Activated CD4-positive, alpha-beta T cell treated with anti-CD3 and anti-CD28 coated beads for 36 hours (primary cell): ENCODE measurements at regions of chr1 and their contacts with region 1.

Region 1: DNA sequence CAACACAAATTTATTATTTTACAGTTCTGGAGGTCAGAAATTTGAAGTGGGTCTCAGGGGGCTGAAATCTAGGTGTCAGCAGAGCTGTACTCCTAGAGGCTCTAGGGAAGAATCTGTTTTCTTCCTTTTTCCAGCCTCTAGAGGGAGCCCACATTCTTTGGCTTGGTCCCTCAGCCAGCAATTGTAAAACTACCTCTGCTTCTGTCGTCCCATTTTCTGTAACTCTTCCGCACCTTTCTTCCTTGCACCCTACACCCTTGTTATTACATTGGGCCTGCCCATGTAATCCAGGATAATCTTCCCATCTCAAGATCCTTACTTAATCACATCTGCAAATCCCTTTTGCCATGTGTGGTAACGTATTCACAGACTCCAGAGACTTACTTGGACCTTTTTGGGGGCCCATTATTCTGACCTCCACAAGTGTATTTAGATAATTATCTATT is 24.8 kb upstream of the THEM4 start:
- DNase-seq: peak; percentile 63
- ATAC-seq: peak; percentile 90
- H3K4me3 Mint-ChIP-seq: no peak overlapping the region
- H3K27ac Mint-ChIP-seq: no peak overlapping the region
- H3K4me1 Mint-ChIP-seq: peaks cover 2% of the 10 kb centered on the region
- H3K27me3 Mint-ChIP-seq: no peaks in the 10 kb centered on the region

Region 2: DNA sequence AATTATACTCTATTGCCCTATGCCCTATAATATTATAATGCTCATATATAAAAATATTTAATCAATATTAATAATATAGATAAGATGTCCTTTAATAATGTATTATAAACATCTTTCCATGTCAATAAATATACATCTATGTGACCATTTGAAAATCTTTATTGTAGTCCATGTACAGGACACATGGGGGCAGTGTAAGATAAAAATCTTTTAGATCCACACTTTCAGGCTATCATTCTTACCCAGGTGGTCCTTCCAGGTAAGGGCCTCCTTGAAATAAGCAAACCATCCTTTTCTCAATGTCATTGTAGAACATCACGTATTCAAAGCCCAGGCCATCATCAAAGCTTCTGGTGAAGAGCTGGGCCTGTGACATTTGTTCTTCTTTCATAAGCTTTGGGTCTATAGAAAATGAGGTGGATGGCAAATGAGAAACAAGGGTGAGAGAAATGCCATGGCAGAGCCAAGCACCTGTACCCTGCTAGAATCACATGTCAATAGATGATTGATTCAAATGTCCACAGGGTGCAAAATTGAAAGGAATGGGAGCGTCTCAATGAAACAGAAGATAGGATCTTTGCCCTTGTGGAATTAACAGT is 45.0 kb before region 1 on chr1:
- CTCF ChIA-PET with region 1: interaction called, 8 read pairs
- POLR2A ChIA-PET with region 1: no interaction called
- intact Hi-C with region 1: loop called in 1 of 2 experiments (anchors 1 kb)
- DNase-seq: no peak
- ATAC-seq: peak; percentile 57
- H3K4me3 Mint-ChIP-seq: no peak overlapping the region
- H3K27ac Mint-ChIP-seq: no peak overlapping the region
- H3K4me1 Mint-ChIP-seq: peaks cover 25% of the 10 kb centered on the region
- H3K27me3 Mint-ChIP-seq: no peaks in the 10 kb centered on the region

Region 3: GRCh38 chr1:151945725-151946364 is 11.8 kb after region 1 on chr1:
- CTCF ChIA-PET with region 1: interaction called, 10 read pairs
- POLR2A ChIA-PET with region 1: no interaction called
- intact Hi-C with region 1: no loop called
- DNase-seq: peak; percentile 82
- ATAC-seq: peak; percentile 45
- H3K4me3 Mint-ChIP-seq: peak overlapping the region; percentile 42
- H3K27ac Mint-ChIP-seq: peak overlapping the region; percentile 88
- H3K4me1 Mint-ChIP-seq: peaks cover 42% of the 10 kb centered on the region
- H3K27me3 Mint-ChIP-seq: no peaks in the 10 kb centered on the region

Region 4: GRCh38 chr1:151993654-151994496 is 59.8 kb after region 1 on chr1 and contains the start of gene S100A10:
- CTCF ChIA-PET with region 1: interaction called, 266 read pairs
- POLR2A ChIA-PET with region 1: no interaction called
- intact Hi-C with region 1: loop called (anchors 1 kb)
- DNase-seq: peak; percentile 85
- ATAC-seq: peak; percentile 79
- H3K4me3 Mint-ChIP-seq: peak within 1 kb of the TSS; percentile 90
- H3K27ac Mint-ChIP-seq: peak within 1 kb of the TSS; percentile 94
- H3K4me1 Mint-ChIP-seq: peaks cover 48% of the 10 kb centered on the region
- H3K27me3 Mint-ChIP-seq: no peaks in the 10 kb centered on the region
- total RNA-seq, gene S100A10: 230 to 246 TPM

Region 5: DNA sequence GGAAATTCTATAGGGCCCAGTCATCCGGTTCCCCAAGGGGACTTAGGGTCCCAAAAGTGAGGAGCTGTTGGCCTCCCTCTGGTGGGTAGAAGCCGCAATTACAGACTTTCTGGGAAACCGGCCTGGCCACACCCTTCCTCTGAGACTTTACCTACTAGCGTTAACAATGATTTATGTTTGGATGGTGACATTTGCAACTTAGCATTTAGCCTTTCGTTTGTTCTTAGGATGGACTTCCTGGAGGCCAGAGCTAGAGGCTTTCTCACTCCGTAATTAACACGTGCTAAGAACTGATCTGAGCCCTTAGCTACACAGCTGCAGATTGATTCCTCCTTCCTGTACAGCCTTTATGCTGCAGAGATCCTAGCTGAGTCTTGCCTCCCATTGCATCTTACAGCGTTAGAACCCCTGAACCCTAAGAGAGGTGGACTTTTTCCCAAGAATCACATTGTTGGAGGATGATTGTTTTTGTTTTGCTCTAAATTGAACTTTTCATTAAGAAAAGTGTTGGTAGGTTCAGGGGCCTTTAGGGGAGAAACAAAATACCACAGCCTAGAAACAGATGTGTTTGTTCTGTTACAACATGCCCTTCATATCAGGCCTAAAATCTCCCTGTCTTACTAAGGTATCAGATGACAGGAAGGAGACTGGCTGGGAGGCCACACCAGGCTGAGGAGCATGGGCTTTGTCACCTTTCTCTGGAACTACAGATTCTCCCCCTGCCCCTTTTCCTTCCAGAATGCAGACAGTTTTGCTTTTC is 100.8 kb after region 1 on chr1:
- CTCF ChIA-PET with region 1: interaction called, 11 read pairs
- POLR2A ChIA-PET with region 1: no interaction called
- intact Hi-C with region 1: no loop called
- DNase-seq: peak; percentile 82
- ATAC-seq: peak; percentile 64
- H3K4me3 Mint-ChIP-seq: peak overlapping the region; percentile 82
- H3K27ac Mint-ChIP-seq: peak overlapping the region; percentile 90
- H3K4me1 Mint-ChIP-seq: peaks cover 41% of the 10 kb centered on the region
- H3K27me3 Mint-ChIP-seq: no peaks in the 10 kb centered on the region